GM12878 (cell line): ENCODE measurements at regions of chr7 and their contacts with region 1.

Region 1: DNA sequence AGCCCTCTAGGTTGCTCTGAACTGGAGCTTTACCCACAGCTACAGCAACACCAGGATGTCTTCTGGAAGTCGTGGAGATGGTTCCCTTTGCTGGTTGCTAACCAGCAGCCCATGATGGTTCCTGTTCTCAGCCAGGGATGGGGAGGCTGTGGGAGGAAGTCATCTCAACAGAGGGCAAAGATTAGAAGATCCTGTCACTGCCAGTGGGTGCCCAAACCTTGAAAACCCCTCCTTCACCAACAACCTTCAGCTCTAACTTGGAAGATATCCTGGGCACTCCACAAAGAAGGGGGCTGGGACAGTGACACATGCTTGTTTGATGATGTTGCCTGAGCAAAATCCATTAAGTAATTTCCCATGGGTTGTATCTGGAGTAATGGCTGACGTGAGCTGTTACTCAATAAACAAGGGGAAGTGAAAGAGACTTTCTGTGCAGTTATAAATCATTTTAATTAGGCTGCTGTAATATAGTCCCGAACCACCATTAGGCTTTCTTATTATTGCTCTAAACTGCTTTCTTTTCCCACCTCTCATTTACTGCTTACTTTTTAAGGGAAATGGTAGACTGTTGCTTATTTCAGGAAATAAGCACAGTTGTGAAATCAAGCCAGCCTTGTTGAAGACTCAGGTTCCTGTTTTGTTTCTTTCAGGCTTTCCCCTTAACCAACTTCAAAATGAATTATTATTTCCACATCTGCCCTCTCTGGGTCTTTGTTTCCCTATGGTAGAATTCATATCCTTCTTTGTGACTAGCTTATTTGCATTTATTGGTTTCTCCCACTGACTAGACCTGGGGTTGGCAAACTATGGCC is 124.8 kb downstream of the PPP1R17 start:
- DNase-seq: peak; percentile 58
- ATAC-seq: peak; percentile 93
- H3K4me3 ChIP-seq: no peak overlapping the region
- H3K27ac ChIP-seq: no peak overlapping the region
- H3K4me1 ChIP-seq: no peaks in the 10 kb centered on the region
- H3K27me3 ChIP-seq: no peaks in the 10 kb centered on the region
- CTCF ChIP-seq: no peak
- EP300 ChIP-seq: peak; percentile 83 to 95
- POLR2A ChIP-seq: no peak
- RAD21 ChIP-seq: no peak

Region 2: DNA sequence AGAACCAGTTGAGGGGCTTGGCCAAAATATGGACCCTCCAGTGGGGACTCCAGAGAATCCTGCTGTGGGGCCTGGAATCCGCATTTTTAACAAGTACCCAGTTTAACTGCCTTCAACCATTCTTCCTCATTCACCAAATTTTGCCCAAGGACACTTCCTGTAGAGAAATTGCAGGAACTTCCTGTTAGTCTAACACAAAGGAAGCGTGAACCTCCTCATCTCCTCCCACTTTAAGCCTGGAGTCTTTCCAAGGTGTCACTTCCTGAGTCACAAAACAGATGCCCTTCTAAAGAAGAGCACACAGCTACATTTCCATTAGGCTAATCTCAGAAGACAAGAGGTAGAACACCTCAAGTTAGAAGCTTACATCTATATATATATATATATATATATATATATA is 63.6 kb after region 1 on chr7:
- CTCF ChIA-PET with region 1: no interaction called
- POLR2A ChIA-PET with region 1: interaction called, 4 read pairs
- RAD21 ChIA-PET with region 1: interaction called, 4 read pairs
- SMC1A ChIA-PET with region 1: interaction called, 3 read pairs
- in situ Hi-C with region 1: no loop called
- intact Hi-C with region 1: loop called (anchors 5 kb)
- DNase-seq: no peak
- ATAC-seq: no peak
- H3K4me3 ChIP-seq: no peak overlapping the region
- H3K27ac ChIP-seq: no peak overlapping the region
- H3K4me1 ChIP-seq: 0 out of 2 replicates have a peak, but pooled peaks cover 4% of the 10 kb centered on the region
- H3K27me3 ChIP-seq: no peaks in the 10 kb centered on the region
- CTCF ChIP-seq: no peak
- EP300 ChIP-seq: no peak
- POLR2A ChIP-seq: no peak
- RAD21 ChIP-seq: no peak

Region 3: DNA sequence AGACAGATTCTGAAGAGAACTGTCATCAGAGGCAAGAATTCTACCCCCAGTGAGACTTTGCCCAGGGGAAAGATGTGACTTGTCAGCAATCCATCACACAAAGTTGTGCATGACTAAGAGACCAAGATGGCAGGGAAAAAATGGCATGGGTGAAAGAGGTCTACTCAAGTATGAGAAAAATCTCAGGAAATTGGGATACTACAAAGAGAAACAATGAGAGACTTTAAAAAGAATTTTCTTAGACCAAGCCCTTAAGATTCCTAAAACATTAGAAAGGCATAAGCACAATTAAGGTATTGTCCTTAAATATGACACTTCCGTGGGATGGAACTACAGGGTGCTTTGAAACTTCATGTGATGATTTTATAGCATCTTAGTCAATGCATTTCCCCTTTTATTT is 304.0 kb after region 1 on chr7:
- CTCF ChIA-PET with region 1: no interaction called
- POLR2A ChIA-PET with region 1: no interaction called
- RAD21 ChIA-PET with region 1: no interaction called
- SMC1A ChIA-PET with region 1: no interaction called
- in situ Hi-C with region 1: no loop called
- intact Hi-C with region 1: no loop called
- DNase-seq: no peak
- ATAC-seq: no peak
- H3K4me3 ChIP-seq: no peak overlapping the region
- H3K27ac ChIP-seq: no peak overlapping the region
- H3K4me1 ChIP-seq: no peaks in the 10 kb centered on the region
- H3K27me3 ChIP-seq: no peaks in the 10 kb centered on the region
- CTCF ChIP-seq: no peak
- EP300 ChIP-seq: no peak
- POLR2A ChIP-seq: no peak
- RAD21 ChIP-seq: no peak